GM12878 (cell line): ENCODE measurements at regions of chr17 and their contacts with region 1.

Region 1: DNA sequence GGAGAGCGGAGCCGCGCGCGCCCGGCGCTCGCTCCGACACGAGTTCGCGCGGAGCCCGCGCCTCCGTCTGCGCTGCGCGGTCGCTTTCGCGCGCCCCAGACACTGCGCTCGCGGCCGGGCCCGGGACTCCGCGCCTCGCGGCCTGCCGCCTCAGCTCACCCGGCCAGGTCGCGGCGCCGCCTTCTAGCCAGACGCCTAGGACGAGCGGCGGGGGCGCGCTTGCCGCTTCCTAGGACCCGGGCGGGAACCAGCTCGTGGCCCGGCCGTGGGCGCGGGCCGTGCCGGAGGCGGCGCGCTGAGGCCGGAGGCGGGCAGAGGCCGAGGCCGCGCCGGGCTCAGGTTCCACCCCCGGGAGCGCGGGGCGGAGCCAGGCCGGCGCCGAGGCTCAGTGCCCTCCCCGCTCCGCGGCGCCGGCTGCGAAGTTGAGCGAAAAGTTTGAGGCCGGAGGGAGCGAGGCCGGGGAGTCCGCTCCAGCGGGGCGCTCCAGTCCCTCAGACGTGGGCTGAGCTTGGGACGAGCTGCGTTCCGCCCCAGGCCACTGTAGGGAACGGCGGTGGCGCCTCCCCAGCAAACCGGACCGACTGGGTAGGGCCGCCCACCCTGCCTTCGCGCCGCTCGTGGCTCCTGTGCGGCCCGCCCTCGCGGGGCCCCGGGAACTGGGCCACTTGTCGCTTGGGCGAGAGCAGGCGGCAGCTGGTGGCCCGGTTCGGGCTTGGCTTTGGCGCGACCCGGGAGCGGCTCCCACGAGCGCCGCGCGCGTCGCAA is at the start of gene SPHK1:
- DNase-seq: no peak
- ATAC-seq: peak; percentile 88
- H3K4me3 ChIP-seq: peak within 1 kb of the TSS; percentile 75
- H3K27ac ChIP-seq: no peak within 1 kb of the TSS
- H3K4me1 ChIP-seq: peaks cover 24% of the 10 kb centered on the region
- H3K27me3 ChIP-seq: peaks cover 2 to 6% of the 10 kb centered on the region in 2 experiments; a peak in 2 of 4 replicates
- CTCF ChIP-seq: no peak
- EP300 ChIP-seq: no peak
- POLR2A ChIP-seq: no peak
- RAD21 ChIP-seq: no peak
- polyA plus RNA-seq, gene SPHK1: not detected

Region 2: DNA sequence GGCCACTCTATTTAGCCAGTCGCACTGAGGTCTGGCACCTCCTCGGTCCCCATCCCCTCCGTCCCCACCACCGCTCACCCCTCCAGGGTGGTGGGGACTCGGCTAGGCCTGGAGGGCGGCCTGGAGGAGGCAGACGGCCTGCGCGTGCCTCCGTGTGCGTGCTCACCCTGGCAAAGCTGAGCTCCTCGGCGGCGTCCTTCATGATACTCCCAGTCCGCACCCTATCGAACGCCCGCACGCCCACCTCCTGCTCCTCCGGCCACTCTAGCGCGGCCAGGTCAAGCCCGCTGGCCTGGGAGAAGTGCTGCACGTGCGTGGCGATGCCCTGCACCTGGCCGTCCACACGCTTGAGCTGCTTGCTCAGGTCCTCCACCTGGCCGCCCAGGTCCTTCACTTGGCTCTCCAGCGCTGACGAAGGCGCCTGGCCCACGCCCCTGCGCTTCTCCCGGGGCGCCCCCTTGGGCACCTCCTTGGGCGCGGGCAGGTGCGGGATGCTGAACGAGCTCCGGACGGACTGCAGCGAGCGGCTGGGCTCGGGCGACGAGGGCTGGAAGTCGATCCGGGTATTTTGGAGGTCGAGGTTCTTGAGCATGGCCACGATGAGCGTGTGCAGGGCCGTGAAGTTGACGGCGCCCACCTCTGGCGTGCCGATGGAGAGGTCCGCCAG is 77.0 kb before region 1 on chr17:
- CTCF ChIA-PET with region 1: interaction called, 46 read pairs
- POLR2A ChIA-PET with region 1: no interaction called
- RAD21 ChIA-PET with region 1: interaction called, 4 read pairs
- SMC1A ChIA-PET with region 1: interaction called, 10 read pairs
- in situ Hi-C with region 1: no loop called
- intact Hi-C with region 1: no loop called
- DNase-seq: no peak
- ATAC-seq: no peak
- H3K4me3 ChIP-seq: no peak overlapping the region
- H3K27ac ChIP-seq: no peak overlapping the region
- H3K4me1 ChIP-seq: no peaks in the 10 kb centered on the region
- H3K27me3 ChIP-seq: no peaks in the 10 kb centered on the region
- CTCF ChIP-seq: no peak
- EP300 ChIP-seq: no peak
- POLR2A ChIP-seq: no peak
- RAD21 ChIP-seq: no peak

Region 3: DNA sequence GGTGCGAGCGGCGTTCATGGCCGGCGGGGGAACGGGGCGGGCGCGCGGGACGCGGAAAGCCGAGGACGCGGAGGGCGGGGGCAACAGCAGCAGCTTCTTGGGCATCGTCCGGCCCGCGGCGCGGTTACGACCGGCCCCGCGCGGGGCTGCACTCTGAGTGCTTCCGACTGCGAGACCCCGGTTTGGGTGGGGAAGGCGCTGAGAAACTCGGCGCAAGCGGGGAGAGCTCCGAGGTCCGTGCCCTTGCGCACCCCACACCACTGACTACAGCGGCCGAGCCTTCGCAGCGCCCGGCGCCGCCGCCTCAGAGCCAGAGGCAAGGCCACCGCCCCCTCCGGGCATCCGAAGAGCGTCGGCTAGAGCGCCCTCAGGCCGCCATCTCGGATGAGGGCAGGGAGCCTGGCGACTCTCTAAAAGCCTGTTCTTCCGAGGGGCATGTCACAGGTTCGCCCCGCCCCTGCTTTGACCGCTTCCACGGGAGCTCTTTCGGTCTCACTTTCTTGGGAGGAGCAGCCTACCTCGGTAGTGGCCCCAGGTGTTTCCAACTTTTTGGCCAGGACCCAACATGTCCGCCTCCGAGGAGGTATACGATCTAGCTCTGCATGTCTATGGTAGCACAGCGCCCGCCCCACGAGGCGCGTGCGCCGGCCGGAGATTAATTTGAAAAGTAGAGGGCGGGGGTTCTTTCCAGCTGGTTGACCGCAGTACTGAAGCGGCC is 30.6 kb before region 1 on chr17 and contains the start of gene PRPSAP1:
- CTCF ChIA-PET with region 1: interaction called, 23 read pairs
- POLR2A ChIA-PET with region 1: interaction called, 9 read pairs
- RAD21 ChIA-PET with region 1: interaction called, 8 read pairs
- SMC1A ChIA-PET with region 1: interaction called, 4 read pairs
- in situ Hi-C with region 1: no loop called
- intact Hi-C with region 1: loop called (anchors 2 kb)
- DNase-seq: peak; percentile 72
- ATAC-seq: peak; percentile 98
- H3K4me3 ChIP-seq: peak within 1 kb of the TSS; percentile 66
- H3K27ac ChIP-seq: peak within 1 kb of the TSS; percentile 91
- H3K4me1 ChIP-seq: peaks cover 13% of the 10 kb centered on the region
- H3K27me3 ChIP-seq: no peaks in the 10 kb centered on the region
- CTCF ChIP-seq: peak in 1 of 3 experiments; percentile 28; a peak in 1 of 6 replicates
- EP300 ChIP-seq: 0 out of 4 replicates have a peak, but pooled peaks of 1 of the 2 experiments have one; percentile 13
- POLR2A ChIP-seq: peak; percentile 99
- RAD21 ChIP-seq: no peak
- polyA plus RNA-seq, gene PRPSAP1: 26.9 to 34.7 TPM